Activated T-helper 1 cell treated with anti-CD3 and anti-CD28 coated beads, Interleukin-12 subunit alpha, Interleukin-12 subunit beta, Interleukin-2, Interleukin-4 antibody, amounts not matched to agents 30 ng/mL and 10 ng/mL and 1 ng/mL, durations not matched to agents 14 hours and 24 hours and 36 hours (primary cell): ENCODE measurements at regions of chr18 and their contacts with region 1.

Region 1: DNA sequence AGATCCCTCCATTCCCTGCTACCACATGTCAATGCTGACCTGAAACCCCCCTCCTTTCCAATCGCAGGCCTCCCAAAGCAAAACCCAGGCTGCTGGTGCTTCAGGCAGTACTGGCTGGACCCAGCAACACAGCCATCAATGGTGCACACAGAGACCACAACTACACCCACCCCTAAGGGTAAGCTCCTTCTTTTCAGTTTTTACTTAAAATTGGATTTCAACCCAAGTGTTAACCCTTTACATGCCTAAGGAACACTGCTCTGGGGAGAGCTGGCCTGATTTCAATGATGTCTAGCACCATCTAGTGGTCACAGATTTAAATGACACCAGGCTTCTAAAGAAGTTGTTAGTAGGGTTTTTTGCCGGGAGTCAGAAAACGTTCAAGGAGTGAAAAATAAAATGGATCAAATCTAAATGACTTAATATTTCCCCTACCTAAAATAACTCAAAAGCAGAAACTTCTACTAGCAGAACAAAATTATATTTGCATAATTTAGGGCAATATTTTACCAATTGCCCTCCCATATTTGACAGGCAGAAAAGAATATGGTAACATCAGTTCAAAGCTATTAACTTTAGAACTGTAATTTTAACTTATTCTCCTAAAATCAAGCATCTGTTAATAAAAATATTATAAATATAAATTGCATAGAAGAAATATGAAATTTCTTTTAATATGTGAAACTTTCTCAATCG is 24.6 kb downstream of the FECH start:
- DNase-seq: no peak
- H3K4me3 Mint-ChIP-seq: no peak overlapping the region
- H3K27ac Mint-ChIP-seq: no peak overlapping the region
- H3K4me1 Mint-ChIP-seq: no peaks in the 10 kb centered on the region
- H3K27me3 Mint-ChIP-seq: no peaks in the 10 kb centered on the region

Region 2: DNA sequence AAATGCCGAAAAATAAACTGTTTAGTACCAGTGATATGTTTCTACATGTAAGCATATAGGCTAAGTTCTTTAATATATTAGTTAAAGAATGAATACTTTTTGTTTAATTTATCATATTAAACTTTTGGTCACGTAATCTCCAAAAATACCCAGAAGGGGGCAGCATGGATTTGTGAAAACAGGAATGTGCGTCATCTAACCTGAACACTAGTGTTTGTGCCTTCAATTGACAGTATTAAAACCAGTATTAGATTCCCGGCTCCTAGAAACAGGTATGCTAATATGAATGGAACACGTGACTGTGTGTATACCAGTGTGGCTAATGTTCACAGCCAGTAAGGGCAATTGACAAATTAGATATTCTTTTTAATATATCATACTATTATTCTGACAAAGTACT is 858.9 kb before region 1 on chr18:
- intact Hi-C with region 1: loop called (anchors 2 kb)
- DNase-seq: no peak
- H3K4me3 Mint-ChIP-seq: no peak overlapping the region
- H3K27ac Mint-ChIP-seq: no peak overlapping the region
- H3K4me1 Mint-ChIP-seq: peaks cover 5% of the 10 kb centered on the region
- H3K27me3 Mint-ChIP-seq: no peaks in the 10 kb centered on the region

Region 3: DNA sequence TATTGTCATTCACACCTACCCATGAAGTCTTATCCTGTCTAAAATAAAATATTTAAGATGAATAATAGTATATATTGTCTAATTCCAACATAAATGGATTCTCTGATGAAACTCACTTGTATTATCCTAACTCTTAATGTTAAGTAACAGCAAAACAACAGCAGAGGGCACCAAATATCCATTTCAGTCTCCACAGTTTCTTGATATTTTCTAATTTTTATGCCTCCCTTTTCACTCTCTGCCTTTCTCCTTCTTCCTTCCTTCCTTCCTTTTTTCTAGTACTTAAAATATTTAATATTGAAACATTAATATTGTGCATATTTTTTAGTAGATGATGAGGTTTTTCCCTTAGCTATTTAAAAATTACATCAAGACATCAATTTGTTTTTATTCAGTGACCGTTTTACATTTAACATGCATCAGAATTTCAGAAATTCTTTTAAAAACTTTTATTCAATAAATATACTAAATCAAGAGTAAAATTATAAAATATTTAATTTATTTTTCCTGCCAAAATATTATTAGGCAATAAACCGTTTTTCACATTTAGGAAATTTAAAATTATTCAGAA is 813.1 kb before region 1 on chr18:
- intact Hi-C with region 1: loop called (anchors 2 kb)
- DNase-seq: no peak
- H3K4me3 Mint-ChIP-seq: no peak overlapping the region
- H3K27ac Mint-ChIP-seq: no peak overlapping the region
- H3K4me1 Mint-ChIP-seq: peaks cover 22% of the 10 kb centered on the region
- H3K27me3 Mint-ChIP-seq: no peaks in the 10 kb centered on the region

Region 4: DNA sequence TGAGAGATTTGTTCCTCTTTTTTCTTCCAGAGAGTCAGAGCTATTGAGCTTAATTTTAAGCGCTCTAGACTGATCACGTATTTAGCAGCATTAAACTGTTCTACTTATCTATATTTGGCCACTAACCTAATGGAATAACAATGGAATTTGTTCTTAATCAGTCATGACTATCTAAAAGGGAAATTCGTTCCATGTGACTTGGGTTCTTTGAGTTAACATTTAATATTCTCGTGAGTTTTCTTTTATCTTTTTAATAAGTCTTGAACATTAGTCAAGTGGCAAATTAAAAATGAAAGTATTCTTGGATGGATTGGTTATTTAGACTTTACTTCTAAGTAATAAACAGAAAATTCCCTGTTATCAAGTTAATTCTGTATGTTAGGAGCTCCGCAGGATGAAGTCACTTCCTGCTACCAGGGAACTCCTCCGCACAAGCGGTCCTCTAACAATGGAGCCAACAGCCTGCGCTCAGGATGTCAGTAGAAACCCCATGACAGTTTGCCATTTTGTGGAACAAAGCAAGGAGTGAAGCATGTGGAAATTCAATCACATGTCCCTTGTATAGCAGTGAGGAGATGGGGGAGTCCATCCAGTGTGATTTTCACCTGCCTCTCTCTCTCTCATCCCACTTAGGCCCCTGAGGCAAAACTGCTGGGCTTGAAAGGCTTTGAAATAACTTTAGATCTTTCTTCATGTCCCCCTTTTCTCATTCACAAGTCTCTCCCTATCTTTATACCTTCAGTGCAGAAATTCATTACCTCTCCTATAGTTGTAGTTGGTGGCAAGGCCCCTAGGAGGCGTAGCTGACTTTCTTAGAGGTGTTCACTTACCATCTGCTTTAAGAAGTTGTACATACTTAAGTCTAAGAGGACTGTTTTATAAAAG is 772.6 kb before region 1 on chr18:
- intact Hi-C with region 1: loop called (anchors 1 kb)
- DNase-seq: no peak
- H3K4me3 Mint-ChIP-seq: no peak overlapping the region
- H3K27ac Mint-ChIP-seq: no peak overlapping the region
- H3K4me1 Mint-ChIP-seq: no peaks in the 10 kb centered on the region
- H3K27me3 Mint-ChIP-seq: no peaks in the 10 kb centered on the region

Region 5: DNA sequence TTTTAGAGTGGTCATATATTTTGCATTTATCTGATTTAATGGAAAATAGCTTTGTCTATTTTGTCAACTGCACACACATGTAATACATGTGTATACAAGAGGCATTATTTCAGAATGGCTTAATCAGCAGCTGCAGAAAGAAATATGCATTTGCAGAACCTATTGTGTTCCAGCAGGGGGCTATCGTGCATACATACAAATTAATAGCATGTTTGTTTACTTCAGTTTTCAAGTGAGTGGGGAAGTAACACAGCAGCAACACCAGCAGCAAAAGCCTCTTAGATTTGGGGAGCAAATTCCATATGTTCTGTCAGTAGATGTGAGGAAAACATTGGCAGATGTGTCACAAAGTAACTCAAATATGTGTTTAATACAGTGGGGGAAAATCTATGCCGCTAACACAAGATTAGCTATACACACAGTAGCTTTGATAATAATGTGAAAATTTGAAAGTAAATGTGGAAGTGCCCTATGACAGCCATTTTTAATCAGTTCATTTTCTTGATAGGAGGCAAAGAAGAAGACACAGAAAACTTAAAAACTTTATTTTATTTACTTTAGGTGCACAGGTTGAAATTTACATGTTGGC is 692.6 kb before region 1 on chr18:
- intact Hi-C with region 1: loop called (anchors 1 kb)
- DNase-seq: no peak
- H3K4me3 Mint-ChIP-seq: no peak overlapping the region
- H3K27ac Mint-ChIP-seq: no peak overlapping the region
- H3K4me1 Mint-ChIP-seq: no peaks in the 10 kb centered on the region
- H3K27me3 Mint-ChIP-seq: no peaks in the 10 kb centered on the region

Region 6: DNA sequence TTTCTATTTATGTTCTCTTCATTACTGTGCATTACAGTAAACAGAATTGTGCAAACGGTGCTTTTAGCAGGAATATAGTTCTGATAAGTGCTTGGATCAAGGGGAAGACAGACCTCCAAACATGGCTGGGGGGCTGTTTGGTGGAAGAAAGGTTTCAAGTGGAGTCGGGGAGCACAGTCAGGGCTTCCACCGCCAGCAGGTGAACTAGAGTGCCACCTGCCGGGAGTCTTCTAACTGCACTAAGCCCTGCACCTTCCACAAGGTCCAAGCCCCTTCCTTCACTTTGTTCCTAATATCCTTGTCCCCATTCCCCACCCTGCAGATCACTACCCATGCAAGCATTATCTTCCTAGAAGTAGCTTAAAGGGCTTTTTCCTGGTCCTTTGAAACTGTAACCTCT is 115.6 kb before region 1 on chr18:
- intact Hi-C with region 1: loop called (anchors 5 kb)
- DNase-seq: no peak
- H3K4me3 Mint-ChIP-seq: no peak overlapping the region
- H3K27ac Mint-ChIP-seq: no peak overlapping the region
- H3K4me1 Mint-ChIP-seq: no peaks in the 10 kb centered on the region
- H3K27me3 Mint-ChIP-seq: peaks cover 25% of the 10 kb centered on the region

Region 7: GRCh38 chr18:57542812-57543427 is 19.0 kb before region 1 on chr18:
- intact Hi-C with region 1: no loop called
- DNase-seq: no peak
- H3K4me3 Mint-ChIP-seq: no peak overlapping the region
- H3K27ac Mint-ChIP-seq: no peak overlapping the region
- H3K4me1 Mint-ChIP-seq: peaks cover 6% of the 10 kb centered on the region
- H3K27me3 Mint-ChIP-seq: peaks cover 2% of the 10 kb centered on the region

Region 8: DNA sequence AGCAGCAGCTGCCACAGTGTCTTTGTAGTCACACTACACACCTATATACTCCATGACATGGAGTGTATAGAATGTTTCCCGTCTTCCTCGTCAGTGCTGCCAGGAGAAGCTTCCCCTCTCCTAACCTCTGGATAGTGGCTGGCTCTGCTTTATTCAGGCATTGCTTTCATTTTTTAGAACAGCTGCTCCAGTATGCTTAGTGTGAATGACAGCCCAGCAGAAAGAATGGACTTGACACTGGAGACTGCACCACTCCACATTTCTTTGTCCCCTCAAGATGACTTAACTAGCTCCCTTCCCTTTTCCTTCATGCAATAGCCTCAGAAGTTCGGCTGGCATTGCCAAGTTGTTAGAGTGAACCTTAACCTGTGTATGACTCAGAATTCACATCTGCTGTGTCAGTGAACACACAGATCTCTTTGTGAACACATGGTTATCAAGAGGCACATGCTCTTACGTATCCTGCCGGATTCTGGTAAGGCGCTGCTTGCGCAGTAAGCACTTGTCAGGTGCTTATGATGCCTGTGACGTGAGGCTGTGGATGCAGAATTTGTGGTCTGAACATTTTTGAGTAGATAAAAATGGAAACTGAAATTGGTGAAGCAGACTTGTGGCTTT is 556.0 kb after region 1 on chr18:
- intact Hi-C with region 1: loop called (anchors 1 kb)
- DNase-seq: no peak
- H3K4me3 Mint-ChIP-seq: no peak overlapping the region
- H3K27ac Mint-ChIP-seq: no peak overlapping the region
- H3K4me1 Mint-ChIP-seq: peaks cover 10% of the 10 kb centered on the region
- H3K27me3 Mint-ChIP-seq: peaks cover 5% of the 10 kb centered on the region